Ascending aorta (tissue), 2 donors: ENCODE measurements at regions of chr10 and their contacts with region 1.

Region 1: DNA sequence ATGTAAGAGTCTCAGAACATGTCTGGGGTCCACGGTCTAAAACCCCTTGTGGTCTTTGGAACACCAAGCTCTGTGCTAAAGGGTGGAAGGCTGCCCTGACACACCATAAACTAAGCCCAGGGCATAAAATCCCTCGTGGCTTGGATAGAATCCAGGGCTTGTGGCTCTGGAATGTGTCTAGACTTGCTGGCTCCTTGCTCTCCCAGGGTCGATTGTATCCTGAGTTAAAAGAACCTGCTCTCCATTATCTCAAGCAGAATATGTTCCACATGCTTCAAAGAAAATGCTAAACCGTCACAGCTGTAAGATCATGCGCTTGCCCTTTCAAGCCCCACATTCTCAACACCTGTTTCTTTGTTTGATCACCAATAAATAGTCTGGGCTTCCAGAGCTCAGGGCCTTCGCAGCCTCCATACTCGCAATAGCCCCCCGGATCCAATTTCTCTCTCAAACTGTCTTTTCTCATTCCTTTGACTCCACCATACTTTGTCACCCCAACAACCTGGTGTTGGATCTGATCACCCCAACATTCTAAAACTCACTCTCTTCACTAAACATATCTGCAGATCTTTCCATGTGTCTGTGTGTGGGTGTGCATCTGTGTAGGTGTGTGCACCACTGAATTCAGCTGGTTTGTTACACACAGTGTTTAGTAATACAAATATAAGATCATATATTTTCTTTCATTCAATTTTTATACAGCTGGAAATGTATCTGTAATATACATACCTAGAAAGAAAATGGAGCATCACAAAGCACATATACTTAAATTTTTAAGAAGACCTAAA is 238.5 kb downstream of the ZMYND11 start:
- DNase-seq: peak in 1 of 2 donors; percentile 84
- H3K4me3 ChIP-seq: no peak overlapping the region
- H3K27ac ChIP-seq: peak overlapping the region; percentile 76 to 87
- H3K4me1 ChIP-seq: peaks cover 9 to 38% of the 10 kb centered on the region in 2 donors
- H3K27me3 ChIP-seq: no peaks in the 10 kb centered on the region
- CTCF ChIP-seq: no peak

Region 2: GRCh38 chr10:329361-330099 is 44.2 kb before region 1 on chr10:
- intact Hi-C with region 1: loop called (anchors 2 kb)
- DNase-seq: peak; percentile 55 to 95
- H3K4me3 ChIP-seq: peak overlapping the region in 1 of 2 donors; percentile 37
- H3K27ac ChIP-seq: peak overlapping the region; percentile 58 to 65
- H3K4me1 ChIP-seq: peaks cover 0 to 5% of the 10 kb centered on the region in 2 donors
- H3K27me3 ChIP-seq: no peaks in the 10 kb centered on the region
- CTCF ChIP-seq: peak in 2 of 3 experiments; percentile 4 to 18

Region 3: GRCh38 chr10:338518-339311 is 35.0 kb before region 1 on chr10:
- intact Hi-C with region 1: loop called (anchors 1 kb)
- DNase-seq: peak in 1 of 2 donors; percentile 73
- H3K4me3 ChIP-seq: peak overlapping the region in 1 of 2 donors; percentile 5
- H3K27ac ChIP-seq: peak overlapping the region; percentile 39 to 44
- H3K4me1 ChIP-seq: peaks cover 4 to 21% of the 10 kb centered on the region in 2 donors
- H3K27me3 ChIP-seq: no peaks in the 10 kb centered on the region
- CTCF ChIP-seq: no peak